Activated CD4-positive, alpha-beta T cell treated with anti-CD3 and anti-CD28 coated beads for 36 hours (primary cell): ENCODE measurements at regions of chr12 and their contacts with region 1.

Region 1: DNA sequence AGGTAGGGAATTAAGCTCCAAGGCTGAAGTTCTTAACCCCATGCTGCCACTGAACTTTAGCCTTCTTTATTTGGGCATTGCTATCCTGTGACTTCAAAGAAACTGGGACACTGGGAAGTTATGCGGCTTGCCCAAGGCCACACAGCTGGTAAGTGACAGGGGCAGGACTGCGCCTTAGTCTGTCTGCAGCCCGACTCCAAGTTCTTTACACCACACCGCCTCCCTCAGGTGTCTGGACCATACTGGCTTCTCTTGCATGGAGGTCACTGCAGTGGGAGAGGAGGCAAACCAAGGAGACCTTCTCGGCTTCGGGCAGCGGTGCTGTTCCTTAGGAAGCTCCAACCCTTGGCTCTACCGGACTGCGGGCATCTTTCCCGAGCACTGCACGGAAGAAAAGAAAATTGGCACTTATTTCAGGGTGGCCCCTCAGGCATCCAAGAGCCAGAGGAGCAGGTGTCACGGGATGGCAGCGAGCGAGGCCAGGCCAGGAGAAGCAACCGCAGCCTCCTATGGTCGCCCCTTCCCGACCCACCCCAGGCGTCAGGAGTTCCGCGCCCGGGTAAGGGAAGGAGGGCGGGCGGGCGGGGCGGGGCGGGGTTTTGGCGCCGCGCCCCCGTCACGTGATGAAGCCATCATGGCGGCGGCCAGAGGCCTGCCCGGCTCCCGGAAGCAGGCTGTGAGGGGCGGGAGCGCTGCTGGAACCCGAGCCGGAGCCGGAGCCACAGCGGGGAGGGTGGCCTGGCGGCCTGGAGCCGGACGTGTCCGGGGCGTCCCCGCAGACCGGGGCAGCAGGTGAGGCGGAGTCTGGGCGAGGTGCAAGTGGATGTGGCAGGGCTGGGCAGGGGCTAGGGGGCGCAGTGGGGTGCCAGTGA is 16.4 kb upstream of the ESPL1 start:
- DNase-seq: peak; percentile 83
- ATAC-seq: peak; percentile 91
- H3K4me3 Mint-ChIP-seq: peak overlapping the region; percentile 97
- H3K27ac Mint-ChIP-seq: peak overlapping the region; percentile 95
- H3K4me1 Mint-ChIP-seq: peaks cover 36% of the 10 kb centered on the region
- H3K27me3 Mint-ChIP-seq: no peaks in the 10 kb centered on the region

Region 2: GRCh38 chr12:53205747-53206419 is 45.8 kb before region 1 on chr12:
- CTCF ChIA-PET with region 1: interaction called, 35 read pairs
- POLR2A ChIA-PET with region 1: no interaction called
- intact Hi-C with region 1: no loop called
- DNase-seq: peak; percentile 89
- ATAC-seq: peak; percentile 78
- H3K4me3 Mint-ChIP-seq: peak overlapping the region; percentile 77
- H3K27ac Mint-ChIP-seq: peak overlapping the region; percentile 87
- H3K4me1 Mint-ChIP-seq: peaks cover 74% of the 10 kb centered on the region
- H3K27me3 Mint-ChIP-seq: no peaks in the 10 kb centered on the region

Region 3: DNA sequence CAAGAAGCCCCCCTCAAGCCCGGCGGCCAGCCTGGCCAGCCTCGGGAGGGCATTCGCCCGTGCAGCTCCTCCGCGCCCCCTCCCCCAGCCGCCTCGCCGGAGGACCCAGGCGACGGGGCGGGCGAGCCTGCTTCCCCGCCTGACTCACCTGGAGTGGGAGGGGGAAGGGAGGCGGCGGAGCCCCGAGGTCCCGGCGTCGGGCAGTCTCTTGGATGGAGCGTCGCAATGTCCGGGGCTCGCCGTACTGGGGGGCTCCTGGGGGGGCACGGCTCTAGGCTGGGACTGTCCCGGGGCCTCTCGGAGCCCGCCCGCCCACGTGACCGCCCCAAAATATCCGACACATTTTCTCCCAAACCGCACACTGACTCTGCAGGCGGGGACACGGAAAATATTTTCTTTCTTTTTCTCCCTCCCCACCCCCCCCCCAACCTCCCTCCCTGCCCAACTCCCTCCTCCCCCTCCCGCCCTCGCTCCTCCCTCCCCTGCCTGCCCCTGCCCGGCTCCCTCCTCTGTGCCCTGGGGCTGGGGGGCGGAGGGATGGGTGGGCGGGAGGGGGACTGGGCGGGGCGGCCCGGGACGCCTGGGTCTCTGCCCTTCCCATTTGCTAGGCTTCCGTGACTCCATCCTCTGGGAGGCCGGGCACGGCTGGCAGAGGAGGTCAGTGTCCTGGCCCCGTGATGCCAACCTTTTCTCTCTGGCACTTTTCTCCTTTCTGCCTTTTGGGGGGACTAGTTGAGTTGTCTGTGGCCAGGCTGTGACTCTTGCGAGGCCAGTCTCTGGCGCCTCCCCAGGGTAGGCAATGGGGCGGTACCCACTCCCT is 19.7 kb before region 1 on chr12 and contains the start of gene RARG:
- CTCF ChIA-PET with region 1: interaction called, 8 read pairs
- POLR2A ChIA-PET with region 1: no interaction called
- intact Hi-C with region 1: loop called in 1 of 2 experiments (anchors 1 kb)
- DNase-seq: peak; percentile 83
- ATAC-seq: peak; percentile 75
- H3K4me3 Mint-ChIP-seq: peak within 1 kb of the TSS; percentile 81
- H3K27ac Mint-ChIP-seq: peak within 1 kb of the TSS; percentile 84
- H3K4me1 Mint-ChIP-seq: peaks cover 77% of the 10 kb centered on the region
- H3K27me3 Mint-ChIP-seq: no peaks in the 10 kb centered on the region
- total RNA-seq, gene RARG: 20.0 to 21.6 TPM

Region 4: DNA sequence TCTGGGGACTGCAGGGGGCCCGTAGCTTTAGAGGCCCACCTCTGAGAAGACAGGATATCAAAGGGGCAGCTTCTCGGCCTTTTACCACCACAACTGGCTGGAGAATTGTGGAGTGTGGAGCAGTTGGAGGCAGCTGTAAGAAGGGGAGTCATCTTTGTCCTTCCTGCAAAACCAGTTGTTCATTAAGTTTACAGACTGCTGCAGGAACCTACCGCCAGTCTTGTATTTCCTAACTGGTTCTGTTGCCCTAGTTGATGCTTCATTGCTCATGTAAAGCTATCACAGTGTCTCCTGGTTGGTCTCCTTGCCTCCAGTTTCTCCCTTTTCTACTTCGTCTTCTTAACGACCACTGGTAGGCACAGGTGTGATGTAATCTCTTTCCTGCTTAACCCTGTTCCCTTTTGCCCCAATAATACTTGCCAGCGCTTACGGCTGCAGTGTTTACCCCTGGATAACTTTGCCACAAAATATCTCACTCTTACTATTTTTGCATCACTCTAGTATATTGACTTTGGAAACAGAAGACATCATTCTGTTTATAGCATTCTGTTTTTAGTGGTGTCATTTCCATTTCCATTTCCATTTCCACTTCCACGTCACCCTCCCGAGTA is 28.3 kb after region 1 on chr12:
- CTCF ChIA-PET with region 1: no interaction called
- POLR2A ChIA-PET with region 1: no interaction called
- intact Hi-C with region 1: no loop called
- DNase-seq: no peak
- ATAC-seq: no peak
- H3K4me3 Mint-ChIP-seq: no peak overlapping the region
- H3K27ac Mint-ChIP-seq: no peak overlapping the region
- H3K4me1 Mint-ChIP-seq: no peaks in the 10 kb centered on the region
- H3K27me3 Mint-ChIP-seq: no peaks in the 10 kb centered on the region

Region 5: GRCh38 chr12:53352331-53353256 is 100.9 kb after region 1 on chr12:
- CTCF ChIA-PET with region 1: no interaction called
- POLR2A ChIA-PET with region 1: no interaction called
- intact Hi-C with region 1: no loop called
- DNase-seq: peak; percentile 91
- ATAC-seq: peak; percentile 100
- H3K4me3 Mint-ChIP-seq: no peak overlapping the region
- H3K27ac Mint-ChIP-seq: peak overlapping the region; percentile 56
- H3K4me1 Mint-ChIP-seq: peaks cover 8% of the 10 kb centered on the region
- H3K27me3 Mint-ChIP-seq: no peaks in the 10 kb centered on the region

Region 6: GRCh38 chr12:53365245-53365904 is 113.7 kb after region 1 on chr12:
- CTCF ChIA-PET with region 1: no interaction called
- POLR2A ChIA-PET with region 1: no interaction called
- intact Hi-C with region 1: no loop called
- DNase-seq: no peak
- ATAC-seq: peak; percentile 82
- H3K4me3 Mint-ChIP-seq: no peak overlapping the region
- H3K27ac Mint-ChIP-seq: peak overlapping the region; percentile 81
- H3K4me1 Mint-ChIP-seq: peaks cover 15% of the 10 kb centered on the region
- H3K27me3 Mint-ChIP-seq: no peaks in the 10 kb centered on the region